ENCODE measurements at regions of chr1 and their contacts with region 1.

Region 1: DNA sequence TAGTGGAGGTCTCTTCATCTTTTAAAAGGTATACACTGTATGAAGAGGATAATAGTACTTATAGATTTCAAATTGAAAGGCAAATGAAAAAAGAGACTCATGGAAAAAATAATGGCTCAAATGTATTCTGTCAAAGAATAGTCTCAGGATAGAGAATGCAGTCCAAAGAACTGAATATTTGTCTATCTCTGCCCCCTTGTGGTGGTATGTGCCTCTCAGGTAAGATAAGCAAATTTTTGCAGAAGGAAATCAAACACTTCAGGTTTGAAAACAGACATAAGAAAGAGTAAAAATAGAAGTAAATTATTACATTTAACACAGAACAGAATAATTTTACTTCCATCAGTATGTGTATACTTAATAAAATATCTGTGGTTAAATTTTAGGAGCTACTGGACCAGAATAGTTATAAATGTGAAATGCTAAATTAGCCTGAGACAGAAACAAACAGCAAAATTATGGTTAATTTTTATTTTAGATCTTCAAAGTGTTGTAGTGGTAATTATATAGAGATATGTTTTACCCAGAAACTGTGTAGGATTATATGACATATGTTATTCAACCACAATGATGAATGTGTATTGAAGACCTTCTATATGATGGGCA is 164.4 kb upstream of the PALMD start:
- DNase-seq: peak; percentile 72
- H3K4me3 Mint-ChIP-seq: no peak overlapping the region
- H3K27ac Mint-ChIP-seq: no peak overlapping the region
- H3K4me1 Mint-ChIP-seq: no peaks in the 10 kb centered on the region
- H3K27me3 Mint-ChIP-seq: no peaks in the 10 kb centered on the region
- CTCF ChIP-seq: peak; percentile 74

Region 2: GRCh38 chr1:98749152-98749756 is 732.2 kb before region 1 on chr1:
- CTCF ChIA-PET with region 1: interaction called, 18 read pairs
- POLR2A ChIA-PET with region 1: no interaction called
- intact Hi-C with region 1: no loop called
- DNase-seq: peak; percentile 25
- H3K4me3 Mint-ChIP-seq: no peak overlapping the region
- H3K27ac Mint-ChIP-seq: no peak overlapping the region
- H3K4me1 Mint-ChIP-seq: no peaks in the 10 kb centered on the region
- H3K27me3 Mint-ChIP-seq: no peaks in the 10 kb centered on the region
- CTCF ChIP-seq: peak; percentile 37

Region 3: GRCh38 chr1:98991127-98992012 is 490.1 kb before region 1 on chr1:
- CTCF ChIA-PET with region 1: no interaction called
- POLR2A ChIA-PET with region 1: no interaction called
- intact Hi-C with region 1: loop called (anchors 10 kb)
- DNase-seq: peak; percentile 62
- H3K4me3 Mint-ChIP-seq: no peak overlapping the region
- H3K27ac Mint-ChIP-seq: peak overlapping the region; percentile 57
- H3K4me1 Mint-ChIP-seq: no peaks in the 10 kb centered on the region
- H3K27me3 Mint-ChIP-seq: no peaks in the 10 kb centered on the region
- CTCF ChIP-seq: peak; percentile 40

Region 4: DNA sequence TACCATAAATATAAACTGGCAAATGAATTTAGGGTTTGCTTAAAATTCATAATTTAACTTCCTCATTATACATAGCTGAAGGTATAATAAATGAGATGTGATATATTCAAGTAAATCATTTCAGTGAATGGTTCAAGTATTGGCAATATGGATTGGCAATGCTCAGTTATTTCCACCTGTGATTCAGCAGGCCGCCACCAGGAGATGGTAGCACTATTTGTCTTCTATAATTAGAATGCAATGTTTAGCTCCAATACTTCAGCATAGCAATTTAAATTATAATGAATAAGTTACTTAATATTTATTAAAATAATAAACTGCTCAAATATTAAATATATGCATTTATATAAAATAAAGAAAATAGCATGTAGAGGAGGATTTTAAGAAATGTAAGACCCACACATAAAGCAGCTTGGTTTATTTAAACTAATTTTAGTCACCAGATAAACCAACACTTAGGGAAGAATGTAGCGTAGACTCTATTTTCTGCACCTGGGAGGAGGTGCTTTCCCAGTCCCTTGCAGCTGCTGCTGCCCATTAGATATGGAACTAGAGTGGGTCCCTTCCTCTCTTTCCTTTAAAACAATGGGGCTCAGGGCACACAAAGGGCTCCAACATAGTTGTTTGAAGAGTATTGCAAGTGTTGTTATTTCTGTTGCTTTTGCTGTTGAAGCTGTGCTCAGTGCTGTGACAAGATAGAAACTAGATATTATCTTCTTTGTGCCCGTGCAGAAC is 155.1 kb before region 1 on chr1:
- CTCF ChIA-PET with region 1: interaction called, 8 read pairs
- POLR2A ChIA-PET with region 1: no interaction called
- intact Hi-C with region 1: loop called (anchors 1 kb)
- DNase-seq: peak; percentile 18
- H3K4me3 Mint-ChIP-seq: no peak overlapping the region
- H3K27ac Mint-ChIP-seq: no peak overlapping the region
- H3K4me1 Mint-ChIP-seq: no peaks in the 10 kb centered on the region
- H3K27me3 Mint-ChIP-seq: no peaks in the 10 kb centered on the region
- CTCF ChIP-seq: peak; percentile 23

Region 5: DNA sequence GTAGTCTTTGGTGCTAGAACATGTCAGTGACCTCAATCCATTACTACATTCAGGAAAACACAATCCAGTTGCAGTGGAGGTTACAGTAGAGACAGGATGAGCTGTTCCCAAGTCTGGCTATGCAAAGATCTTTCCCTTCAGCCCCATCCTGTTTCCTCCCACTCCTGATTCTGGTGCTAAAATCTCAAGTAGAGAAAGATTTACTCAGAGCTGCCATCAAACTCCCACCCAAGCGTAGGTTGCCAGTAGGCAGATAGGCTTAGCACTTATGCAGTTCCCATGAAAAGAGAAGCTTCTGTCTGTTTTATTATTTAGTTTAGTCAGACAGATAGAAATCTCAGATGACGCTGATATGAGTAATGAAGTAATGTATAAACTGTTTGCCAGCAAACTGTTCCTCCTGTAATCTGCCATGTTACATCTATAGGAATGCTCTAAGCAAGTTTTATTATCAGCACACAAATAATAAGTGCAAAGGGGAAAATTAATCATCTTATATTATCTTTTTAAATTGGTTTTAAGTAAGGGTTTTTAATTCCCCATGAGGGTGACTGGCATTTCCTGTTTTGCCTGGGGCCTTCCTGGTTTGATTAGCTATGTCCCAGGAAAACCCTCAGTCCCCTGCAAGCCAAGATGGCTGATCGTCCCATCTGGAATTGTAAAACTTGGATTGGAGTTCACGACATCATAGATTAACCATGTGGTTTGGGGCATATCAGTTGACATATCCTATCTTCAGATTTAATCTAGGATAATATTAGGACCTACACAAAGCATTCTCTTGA is 23.9 kb before region 1 on chr1:
- CTCF ChIA-PET with region 1: no interaction called
- POLR2A ChIA-PET with region 1: no interaction called
- intact Hi-C with region 1: no loop called
- DNase-seq: peak; percentile 57
- H3K4me3 Mint-ChIP-seq: no peak overlapping the region
- H3K27ac Mint-ChIP-seq: peak overlapping the region; percentile 36
- H3K4me1 Mint-ChIP-seq: peaks cover 14% of the 10 kb centered on the region
- H3K27me3 Mint-ChIP-seq: no peaks in the 10 kb centered on the region
- CTCF ChIP-seq: no peak

Region 6: DNA sequence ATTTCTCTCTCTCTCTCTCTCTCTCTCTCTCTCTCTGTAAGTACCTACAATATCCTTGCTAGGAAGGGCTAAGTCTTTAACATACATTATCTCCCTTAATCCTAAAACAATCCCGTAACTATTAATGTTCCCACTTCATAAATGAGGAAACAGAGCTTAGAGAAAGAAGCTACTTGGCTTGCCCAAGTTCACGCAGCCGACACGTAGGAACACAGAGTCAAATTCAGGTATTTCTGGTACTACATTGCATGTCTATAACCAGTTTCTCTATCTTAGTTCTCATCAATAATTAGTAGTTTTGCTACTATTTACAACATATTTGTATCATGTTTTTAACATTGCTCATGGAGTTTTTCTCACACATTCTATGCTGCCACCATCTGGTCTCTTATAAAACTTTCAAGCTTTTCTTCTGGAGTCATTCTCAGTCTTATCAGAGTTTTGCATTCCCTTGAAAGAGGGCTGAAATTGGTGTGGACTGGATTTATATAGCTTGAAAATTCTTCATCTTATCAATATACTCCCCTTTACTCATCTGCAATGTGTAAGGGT is 45.5 kb after region 1 on chr1:
- CTCF ChIA-PET with region 1: interaction called, 15 read pairs
- POLR2A ChIA-PET with region 1: no interaction called
- intact Hi-C with region 1: no loop called
- DNase-seq: peak; percentile 21
- H3K4me3 Mint-ChIP-seq: no peak overlapping the region
- H3K27ac Mint-ChIP-seq: no peak overlapping the region
- H3K4me1 Mint-ChIP-seq: no peaks in the 10 kb centered on the region
- H3K27me3 Mint-ChIP-seq: no peaks in the 10 kb centered on the region
- CTCF ChIP-seq: peak; percentile 30

Region 7: GRCh38 chr1:99645699-99646531 is 164.4 kb after region 1 on chr1 and contains the start of gene PALMD:
- CTCF ChIA-PET with region 1: interaction called, 16 read pairs
- POLR2A ChIA-PET with region 1: no interaction called
- intact Hi-C with region 1: no loop called
- DNase-seq: peak; percentile 71
- H3K4me3 Mint-ChIP-seq: peak within 1 kb of the TSS; percentile 56
- H3K27ac Mint-ChIP-seq: peak within 1 kb of the TSS; percentile 46
- H3K4me1 Mint-ChIP-seq: peaks cover 34% of the 10 kb centered on the region
- H3K27me3 Mint-ChIP-seq: no peaks in the 10 kb centered on the region
- CTCF ChIP-seq: no peak
- total RNA-seq, gene PALMD: 0.12 and 0.33 TPM in 2 replicates

Region 8: GRCh38 chr1:99707535-99708142 is 226.1 kb after region 1 on chr1:
- CTCF ChIA-PET with region 1: interaction called, 8 read pairs
- POLR2A ChIA-PET with region 1: interaction called, 4 read pairs
- intact Hi-C with region 1: loop called (anchors 1 kb)
- DNase-seq: peak; percentile 73
- H3K4me3 Mint-ChIP-seq: no peak overlapping the region
- H3K27ac Mint-ChIP-seq: no peak overlapping the region
- H3K4me1 Mint-ChIP-seq: no peaks in the 10 kb centered on the region
- H3K27me3 Mint-ChIP-seq: no peaks in the 10 kb centered on the region
- CTCF ChIP-seq: peak; percentile 84

Measured in MCF 10A (cell line).